GM12878 (cell line): ENCODE measurements at regions of chr6 and their contacts with region 1.

Region 1: DNA sequence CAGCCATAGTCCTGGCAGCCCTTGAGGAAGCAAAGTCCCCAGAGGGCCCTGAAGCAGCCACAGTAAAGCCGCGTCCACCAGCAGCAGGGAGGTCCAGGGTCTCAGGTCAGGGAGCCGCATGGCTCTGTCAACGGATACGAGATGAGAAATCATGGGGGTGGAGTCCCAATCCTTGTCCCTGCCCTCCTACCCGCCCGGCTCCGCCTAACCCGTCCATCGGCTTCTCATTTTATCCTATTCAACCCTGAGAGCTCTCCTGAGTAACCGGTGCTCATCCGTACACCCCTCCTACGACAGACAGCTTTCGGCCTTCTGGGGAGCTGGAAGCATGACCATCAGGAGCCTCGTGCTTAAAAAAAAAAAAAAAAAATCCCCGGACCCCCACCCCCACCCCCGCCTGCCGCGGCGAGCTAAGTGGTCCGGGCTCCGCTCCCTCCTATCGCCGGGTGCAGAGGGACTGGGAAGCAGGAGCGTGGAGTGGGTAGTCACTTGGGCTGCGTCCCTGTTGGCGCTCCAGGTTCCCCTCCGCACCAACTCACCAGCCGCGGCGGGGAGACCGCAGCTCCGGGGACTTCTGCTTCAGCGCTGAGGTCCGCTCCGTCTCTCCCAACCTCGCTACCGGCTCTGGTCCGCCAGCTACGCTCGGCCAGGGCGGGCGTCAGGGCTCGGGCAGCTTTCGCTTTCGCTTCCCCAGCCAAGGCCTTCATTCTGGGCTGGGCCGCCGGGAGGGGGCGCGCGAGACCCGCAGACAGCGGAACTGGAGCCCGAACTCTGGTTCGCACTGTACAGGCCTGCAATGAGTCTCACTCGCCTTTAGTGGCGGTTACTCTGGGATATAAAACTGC is at the start of gene TAP2:
- DNase-seq: no peak
- ATAC-seq: peak; percentile 85
- H3K4me3 ChIP-seq: peak within 1 kb of the TSS; percentile 95
- H3K27ac ChIP-seq: peak within 1 kb of the TSS; percentile 75
- H3K4me1 ChIP-seq: peaks cover 60% of the 10 kb centered on the region
- H3K27me3 ChIP-seq: no peaks in the 10 kb centered on the region
- CTCF ChIP-seq: peak; percentile 89 to 97 (median 96); a peak in 5 of 6 replicates
- EP300 ChIP-seq: no peak
- POLR2A ChIP-seq: peak; percentile 86
- RAD21 ChIP-seq: peak; percentile 98
- polyA plus RNA-seq, gene TAP2: 5.3 to 6.7 TPM

Region 2: DNA sequence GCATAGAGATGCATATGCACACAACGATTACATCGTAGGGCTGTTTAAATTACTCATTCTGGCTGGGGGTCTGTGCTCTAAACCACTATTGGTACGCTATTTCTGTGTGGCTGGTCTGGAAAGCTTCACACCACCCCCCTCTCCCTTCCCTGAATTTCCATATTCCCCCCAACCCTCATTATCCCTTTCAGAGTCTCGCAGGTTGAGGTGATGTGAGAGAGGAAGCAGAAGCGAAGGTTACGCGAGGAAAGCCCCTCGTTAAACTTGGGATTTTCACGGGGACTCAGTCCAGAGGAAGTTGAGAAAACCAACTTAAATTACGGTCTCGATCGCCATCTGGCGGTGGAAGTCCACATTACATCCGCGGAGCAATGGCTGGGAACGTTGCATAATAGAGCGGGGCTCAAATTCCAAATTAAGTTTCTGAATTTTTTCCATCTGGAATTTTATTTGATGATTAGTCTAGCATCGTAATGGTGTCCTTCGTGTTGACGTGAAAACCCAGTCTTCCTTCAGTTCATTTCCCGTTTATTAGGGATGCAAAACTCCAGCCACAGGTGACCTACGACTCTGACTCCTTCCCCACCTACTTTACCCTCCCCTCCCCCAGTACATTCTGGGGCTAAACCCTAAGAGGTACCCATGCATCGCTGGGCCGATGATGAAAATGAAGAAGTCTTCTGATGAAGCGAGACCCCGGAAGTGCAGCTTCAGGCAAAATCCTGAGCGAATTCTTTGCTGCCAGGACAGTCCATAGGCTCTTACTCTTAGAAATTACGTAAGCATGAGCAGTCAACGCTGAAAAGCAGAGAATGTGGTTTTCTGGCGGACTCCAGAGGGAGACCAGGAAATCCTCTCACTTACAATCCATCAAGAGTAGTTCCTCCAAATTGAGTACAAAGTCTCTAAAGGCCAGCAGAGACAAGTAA is 41.2 kb before region 1 on chr6:
- CTCF ChIA-PET with region 1: interaction called, 11 read pairs
- POLR2A ChIA-PET with region 1: no interaction called
- RAD21 ChIA-PET with region 1: interaction called, 12 read pairs
- SMC1A ChIA-PET with region 1: interaction called, 5 read pairs
- in situ Hi-C with region 1: no loop called
- intact Hi-C with region 1: no loop called
- DNase-seq: no peak
- ATAC-seq: peak; percentile 89
- H3K4me3 ChIP-seq: peak overlapping the region; percentile 29; the same call in 1 of the 2 replicates
- H3K27ac ChIP-seq: peak overlapping the region; percentile 32
- H3K4me1 ChIP-seq: peaks cover 19% of the 10 kb centered on the region
- H3K27me3 ChIP-seq: peaks cover 0 to 5% of the 10 kb centered on the region in 2 experiments; a peak in 2 of 4 replicates
- CTCF ChIP-seq: peak; percentile 69 to 89 (median 86)
- EP300 ChIP-seq: no peak
- POLR2A ChIP-seq: no peak
- RAD21 ChIP-seq: peak; percentile 74

Region 3: DNA sequence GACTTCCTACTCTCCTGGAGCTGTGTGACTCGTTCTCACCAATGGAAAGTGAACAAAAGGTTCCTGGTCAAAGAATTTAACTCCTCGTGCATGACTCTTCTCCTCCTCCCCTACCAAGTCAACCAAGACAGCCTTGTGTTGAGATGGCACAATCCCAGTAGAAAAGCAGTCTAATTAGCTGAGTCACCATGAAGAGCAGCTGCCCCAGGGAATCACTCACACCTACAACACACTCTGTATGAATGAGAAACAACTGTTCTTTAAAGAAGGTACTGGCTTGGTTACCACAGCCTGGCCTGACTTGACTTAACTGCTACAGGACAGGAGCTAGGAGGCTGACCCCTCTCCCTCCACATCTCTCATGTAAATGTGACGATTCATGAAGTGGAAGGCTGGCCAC is 18.6 kb before region 1 on chr6:
- CTCF ChIA-PET with region 1: interaction called, 20 read pairs
- POLR2A ChIA-PET with region 1: interaction called, 10 read pairs
- RAD21 ChIA-PET with region 1: interaction called, 13 read pairs
- SMC1A ChIA-PET with region 1: interaction called, 12 read pairs
- in situ Hi-C with region 1: no loop called
- intact Hi-C with region 1: no loop called
- DNase-seq: no peak
- ATAC-seq: no peak
- H3K4me3 ChIP-seq: no peak overlapping the region
- H3K27ac ChIP-seq: no peak overlapping the region
- H3K4me1 ChIP-seq: peaks cover 23% of the 10 kb centered on the region
- H3K27me3 ChIP-seq: no peaks in the 10 kb centered on the region
- CTCF ChIP-seq: no peak
- EP300 ChIP-seq: no peak
- POLR2A ChIP-seq: no peak
- RAD21 ChIP-seq: no peak

Region 4: GRCh38 chr6:32853541-32854375 is 15.4 kb after region 1 on chr6 and contains the starts of genes PSMB9 and TAP1:
- CTCF ChIA-PET with region 1: interaction called, 299 read pairs
- POLR2A ChIA-PET with region 1: interaction called, 357 read pairs
- RAD21 ChIA-PET with region 1: interaction called, 269 read pairs
- SMC1A ChIA-PET with region 1: interaction called, 131 read pairs
- in situ Hi-C with region 1: no loop called
- intact Hi-C with region 1: loop called (anchors 1 kb)
- DNase-seq: peak; percentile 89
- ATAC-seq: peak; percentile 88
- H3K4me3 ChIP-seq: peak within 1 kb of the TSS; percentile 88
- H3K27ac ChIP-seq: peak within 1 kb of the TSS; percentile 100
- H3K4me1 ChIP-seq: peaks cover 32% of the 10 kb centered on the region
- H3K27me3 ChIP-seq: no peaks in the 10 kb centered on the region
- CTCF ChIP-seq: peak; percentile 79 to 84 (median 83)
- EP300 ChIP-seq: no peak
- POLR2A ChIP-seq: peak; percentile 83
- RAD21 ChIP-seq: peak; percentile 78
- polyA plus RNA-seq, gene PSMB9: 202 to 299 TPM
- polyA plus RNA-seq, gene TAP1: 33.4 to 60.0 TPM

Region 5: DNA sequence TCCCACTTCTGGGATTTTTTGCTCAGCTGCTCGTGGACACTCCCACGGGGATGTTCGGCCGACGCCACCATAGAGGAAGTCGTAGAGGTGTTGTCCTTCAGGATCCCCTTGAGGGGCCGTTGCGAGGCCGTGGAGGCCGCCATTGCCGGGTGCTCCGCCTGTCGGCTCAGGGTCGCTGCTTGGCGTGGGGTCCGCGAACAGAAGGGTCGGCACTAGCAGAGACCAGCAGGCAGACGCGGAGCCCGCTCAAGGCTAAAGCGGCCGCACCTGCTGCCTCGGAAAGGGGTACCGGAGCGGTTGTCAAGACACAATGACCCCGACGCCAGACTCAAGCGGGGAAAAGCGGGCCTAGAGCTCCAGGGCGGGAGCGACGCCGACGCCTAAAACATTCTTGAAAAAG is 41.4 kb after region 1 on chr6:
- CTCF ChIA-PET with region 1: interaction called, 14 read pairs
- POLR2A ChIA-PET with region 1: interaction called, 4 read pairs
- RAD21 ChIA-PET with region 1: interaction called, 19 read pairs
- SMC1A ChIA-PET with region 1: interaction called, 5 read pairs
- in situ Hi-C with region 1: no loop called
- intact Hi-C with region 1: no loop called
- DNase-seq: no peak
- ATAC-seq: no peak
- H3K4me3 ChIP-seq: no peak overlapping the region
- H3K27ac ChIP-seq: no peak overlapping the region
- H3K4me1 ChIP-seq: 0 out of 2 replicates have a peak, but pooled peaks cover 3% of the 10 kb centered on the region
- H3K27me3 ChIP-seq: no peaks in the 10 kb centered on the region; a peak in 1 of 4 replicates
- CTCF ChIP-seq: no peak
- EP300 ChIP-seq: no peak
- POLR2A ChIP-seq: no peak
- RAD21 ChIP-seq: no peak

Region 6: DNA sequence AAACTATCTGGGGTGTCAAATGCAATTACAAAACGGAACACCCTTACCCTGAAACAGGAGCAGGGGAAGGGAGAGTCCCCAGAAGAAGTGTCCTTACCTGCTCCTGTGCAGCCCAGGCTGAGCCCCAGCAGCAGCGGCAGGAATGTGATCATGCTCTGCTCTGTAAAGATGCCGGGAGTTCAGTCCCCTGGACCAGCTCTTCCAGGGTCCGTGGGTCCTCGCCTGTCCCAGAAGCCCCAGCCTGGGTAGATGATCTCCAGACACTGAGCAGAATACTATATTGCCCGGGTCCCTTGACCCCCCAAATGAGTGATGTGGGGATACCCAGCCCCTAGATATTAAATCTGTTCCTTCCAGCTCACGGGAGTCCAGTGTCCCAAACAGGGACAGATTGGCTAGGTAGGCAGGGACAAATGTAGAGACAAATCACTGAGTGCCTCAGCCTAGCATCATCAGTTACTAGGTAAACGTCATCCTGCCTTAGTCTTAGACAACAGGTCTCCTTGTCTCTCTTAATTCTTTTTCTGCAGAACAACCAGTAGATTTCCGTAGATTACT is 102.4 kb after region 1 on chr6 and contains the start of gene HLA-DMB:
- CTCF ChIA-PET with region 1: interaction called, 8 read pairs
- POLR2A ChIA-PET with region 1: interaction called, 9 read pairs
- RAD21 ChIA-PET with region 1: interaction called, 18 read pairs
- SMC1A ChIA-PET with region 1: interaction called, 5 read pairs
- in situ Hi-C with region 1: no loop called
- intact Hi-C with region 1: loop called (anchors 2 kb)
- DNase-seq: peak; percentile 97
- ATAC-seq: peak; percentile 74
- H3K4me3 ChIP-seq: peak within 1 kb of the TSS; percentile 79
- H3K27ac ChIP-seq: peak within 1 kb of the TSS; percentile 96
- H3K4me1 ChIP-seq: peaks cover 41% of the 10 kb centered on the region
- H3K27me3 ChIP-seq: no peaks in the 10 kb centered on the region
- CTCF ChIP-seq: no peak
- EP300 ChIP-seq: no peak
- POLR2A ChIP-seq: peak; percentile 71
- RAD21 ChIP-seq: no peak
- polyA plus RNA-seq, gene HLA-DMB: 117 to 170 TPM

Region 7: GRCh38 chr6:32952817-32953739 is 114.7 kb after region 1 on chr6 and contains the start of gene HLA-DMA:
- CTCF ChIA-PET with region 1: interaction called, 25 read pairs
- POLR2A ChIA-PET with region 1: interaction called, 7 read pairs
- RAD21 ChIA-PET with region 1: interaction called, 20 read pairs
- SMC1A ChIA-PET with region 1: interaction called, 20 read pairs
- in situ Hi-C with region 1: no loop called
- intact Hi-C with region 1: no loop called
- DNase-seq: peak; percentile 99
- ATAC-seq: peak; percentile 94
- H3K4me3 ChIP-seq: peak within 1 kb of the TSS; percentile 98
- H3K27ac ChIP-seq: peak within 1 kb of the TSS; percentile 90
- H3K4me1 ChIP-seq: peaks cover 44% of the 10 kb centered on the region
- H3K27me3 ChIP-seq: no peaks in the 10 kb centered on the region
- CTCF ChIP-seq: peak; percentile 71 to 77 (median 74)
- EP300 ChIP-seq: peak; percentile 32 to 67; a peak in 3 of 4 replicates
- POLR2A ChIP-seq: peak; percentile 98
- RAD21 ChIP-seq: peak; percentile 46
- polyA plus RNA-seq, gene HLA-DMA: 389 to 552 TPM